WTC11 (cell line): ENCODE measurements at regions of chr4 and their contacts with region 1.

Region 1: GRCh38 chr4:100093091-100093866 is 97.0 kb downstream of the DDIT4L start:
- DNase-seq: peak; percentile 80
- ATAC-seq: peak; percentile 96
- H3K4me3 Mint-ChIP-seq: no peak overlapping the region
- H3K27ac Mint-ChIP-seq: peak overlapping the region; percentile 96
- H3K4me1 Mint-ChIP-seq: peaks cover 49% of the 10 kb centered on the region
- H3K27me3 Mint-ChIP-seq: no peaks in the 10 kb centered on the region
- CTCF ChIP-seq: peak; percentile 66; the same call in 1 of the 2 replicates

Region 2: GRCh38 chr4:99710681-99711345 is 382.5 kb before region 1 on chr4:
- CTCF ChIA-PET with region 1: no interaction called
- POLR2A ChIA-PET with region 1: no interaction called
- DNase-seq: no peak
- ATAC-seq: no peak
- H3K4me3 Mint-ChIP-seq: no peak overlapping the region
- H3K27ac Mint-ChIP-seq: no peak overlapping the region
- H3K4me1 Mint-ChIP-seq: no peaks in the 10 kb centered on the region; the same call in 1 of the 2 replicates
- H3K27me3 Mint-ChIP-seq: no peaks in the 10 kb centered on the region; the same call in 1 of the 2 replicates
- CTCF ChIP-seq: no peak

Region 3: GRCh38 chr4:100075056-100075455 is 18.2 kb before region 1 on chr4:
- CTCF ChIA-PET with region 1: no interaction called
- POLR2A ChIA-PET with region 1: no interaction called
- DNase-seq: no peak
- ATAC-seq: no peak
- H3K4me3 Mint-ChIP-seq: no peak overlapping the region
- H3K27ac Mint-ChIP-seq: no peak overlapping the region
- H3K4me1 Mint-ChIP-seq: no peaks in the 10 kb centered on the region
- H3K27me3 Mint-ChIP-seq: no peaks in the 10 kb centered on the region; the same call in 1 of the 2 replicates
- CTCF ChIP-seq: no peak

Region 4: DNA sequence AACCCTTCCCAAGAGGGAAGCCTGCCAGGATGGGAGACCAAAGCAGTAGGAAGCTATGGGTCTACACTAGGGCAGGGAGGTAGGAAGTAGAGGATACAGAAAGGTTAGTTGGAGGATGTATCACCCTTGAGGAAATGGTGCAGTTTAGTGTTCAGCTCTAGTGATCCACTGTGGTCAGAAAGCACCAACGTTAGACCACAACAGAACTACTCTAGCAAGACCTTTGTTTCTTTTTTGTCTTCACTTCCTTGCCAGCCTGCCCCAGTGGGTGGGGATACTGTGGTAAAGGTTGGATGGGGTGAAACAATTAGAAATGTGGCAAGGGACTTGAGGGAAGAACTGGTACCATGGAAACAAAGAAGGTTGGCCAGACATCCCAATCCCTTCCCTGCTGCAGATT is 13.7 kb after region 1 on chr4:
- CTCF ChIA-PET with region 1: interaction called, 11 read pairs
- POLR2A ChIA-PET with region 1: no interaction called
- DNase-seq: no peak
- ATAC-seq: no peak
- H3K4me3 Mint-ChIP-seq: no peak overlapping the region
- H3K27ac Mint-ChIP-seq: no peak overlapping the region
- H3K4me1 Mint-ChIP-seq: no peaks in the 10 kb centered on the region
- H3K27me3 Mint-ChIP-seq: no peaks in the 10 kb centered on the region
- CTCF ChIP-seq: no peak